MCF 10A (cell line): ENCODE measurements at regions of chr17 and their contacts with region 1.

Region 1: DNA sequence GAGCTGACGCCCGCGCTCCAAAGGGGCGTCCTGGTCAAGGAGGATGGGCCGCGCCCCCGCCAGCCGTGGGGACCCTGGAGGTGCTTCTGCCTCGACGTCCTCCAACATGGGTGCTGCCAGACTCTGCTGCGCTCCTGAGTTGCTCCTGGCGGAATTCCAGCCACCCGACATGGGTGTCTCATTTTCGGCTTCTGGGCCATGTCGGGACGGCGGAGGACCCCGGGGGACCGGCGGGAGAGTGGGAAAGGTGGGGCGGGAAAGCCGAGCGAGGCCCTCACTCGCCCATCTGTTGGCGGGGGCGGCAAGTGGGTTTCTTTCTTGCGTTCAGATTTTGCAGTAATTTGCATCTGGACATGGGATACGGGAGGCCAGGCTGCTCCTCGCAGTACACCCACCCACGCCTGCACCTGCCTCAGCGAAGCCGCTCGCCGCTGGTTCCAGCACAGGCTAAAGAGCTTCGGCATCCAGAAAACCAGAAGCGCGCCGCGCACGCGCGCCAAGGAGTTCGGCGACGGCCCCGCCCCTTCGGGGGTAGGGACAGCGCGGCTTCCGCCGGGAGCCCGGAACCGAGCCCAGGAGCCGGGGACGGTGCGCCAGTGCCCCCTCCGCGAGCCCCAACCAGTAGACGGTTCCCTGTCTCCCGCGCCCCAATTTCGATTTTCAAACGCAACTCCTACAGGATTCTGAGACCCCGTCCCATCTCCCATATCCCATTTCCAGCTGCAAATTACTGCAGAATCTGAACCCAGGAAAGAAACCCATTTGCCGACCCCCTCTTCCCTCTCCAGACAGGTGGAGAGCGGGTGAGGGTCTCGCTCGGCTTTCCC is at the start of gene ARMC7:
- DNase-seq: peak; percentile 86
- H3K4me3 Mint-ChIP-seq: peak within 1 kb of the TSS; percentile 78
- H3K27ac Mint-ChIP-seq: peak within 1 kb of the TSS; percentile 39
- H3K4me1 Mint-ChIP-seq: peaks cover 12% of the 10 kb centered on the region
- H3K27me3 Mint-ChIP-seq: no peaks in the 10 kb centered on the region
- CTCF ChIP-seq: no peak
- total RNA-seq, gene ARMC7: 9.3 and 13.3 TPM in 2 replicates

Region 2: GRCh38 chr17:74892974-74893911 is 216.4 kb before region 1 on chr17 and contains the start of gene FADS6:
- CTCF ChIA-PET with region 1: no interaction called
- POLR2A ChIA-PET with region 1: no interaction called
- intact Hi-C with region 1: no loop called
- DNase-seq: no peak
- H3K4me3 Mint-ChIP-seq: no peak within 1 kb of the TSS
- H3K27ac Mint-ChIP-seq: no peak within 1 kb of the TSS
- H3K4me1 Mint-ChIP-seq: no peaks in the 10 kb centered on the region
- H3K27me3 Mint-ChIP-seq: peaks cover 53% of the 10 kb centered on the region
- CTCF ChIP-seq: no peak
- total RNA-seq, gene FADS6: not detected in 2 replicates

Region 3: GRCh38 chr17:75020331-75021075 is 89.1 kb before region 1 on chr17:
- CTCF ChIA-PET with region 1: no interaction called
- POLR2A ChIA-PET with region 1: no interaction called
- intact Hi-C with region 1: no loop called
- DNase-seq: no peak
- H3K4me3 Mint-ChIP-seq: no peak overlapping the region
- H3K27ac Mint-ChIP-seq: no peak overlapping the region
- H3K4me1 Mint-ChIP-seq: no peaks in the 10 kb centered on the region
- H3K27me3 Mint-ChIP-seq: no peaks in the 10 kb centered on the region
- CTCF ChIP-seq: no peak

Region 4: GRCh38 chr17:75059369-75060345 is 50.0 kb before region 1 on chr17:
- CTCF ChIA-PET with region 1: interaction called, 17 read pairs
- POLR2A ChIA-PET with region 1: interaction called, 4 read pairs
- intact Hi-C with region 1: no loop called
- DNase-seq: no peak
- H3K4me3 Mint-ChIP-seq: no peak overlapping the region
- H3K27ac Mint-ChIP-seq: no peak overlapping the region
- H3K4me1 Mint-ChIP-seq: no peaks in the 10 kb centered on the region
- H3K27me3 Mint-ChIP-seq: no peaks in the 10 kb centered on the region
- CTCF ChIP-seq: peak; percentile 30

Region 5: GRCh38 chr17:75096082-75096625 is 13.5 kb before region 1 on chr17:
- CTCF ChIA-PET with region 1: interaction called, 14 read pairs
- POLR2A ChIA-PET with region 1: interaction called, 37 read pairs
- intact Hi-C with region 1: no loop called
- DNase-seq: peak; percentile 97
- H3K4me3 Mint-ChIP-seq: peak overlapping the region; percentile 62
- H3K27ac Mint-ChIP-seq: peak overlapping the region; percentile 98
- H3K4me1 Mint-ChIP-seq: peaks cover 35% of the 10 kb centered on the region
- H3K27me3 Mint-ChIP-seq: no peaks in the 10 kb centered on the region
- CTCF ChIP-seq: no peak

Region 6: GRCh38 chr17:75144816-75145512 is 35.3 kb after region 1 on chr17:
- CTCF ChIA-PET with region 1: interaction called, 11 read pairs
- POLR2A ChIA-PET with region 1: interaction called, 3 read pairs
- intact Hi-C with region 1: no loop called
- DNase-seq: no peak
- H3K4me3 Mint-ChIP-seq: no peak overlapping the region
- H3K27ac Mint-ChIP-seq: no peak overlapping the region
- H3K4me1 Mint-ChIP-seq: no peaks in the 10 kb centered on the region
- H3K27me3 Mint-ChIP-seq: no peaks in the 10 kb centered on the region
- CTCF ChIP-seq: no peak

Region 7: GRCh38 chr17:75199886-75200618 is 90.4 kb after region 1 on chr17:
- CTCF ChIA-PET with region 1: interaction called, 93 read pairs
- POLR2A ChIA-PET with region 1: interaction called, 23 read pairs
- intact Hi-C with region 1: loop called (anchors 1 kb)
- DNase-seq: no peak
- H3K4me3 Mint-ChIP-seq: no peak overlapping the region
- H3K27ac Mint-ChIP-seq: no peak overlapping the region
- H3K4me1 Mint-ChIP-seq: peaks cover 6% of the 10 kb centered on the region
- H3K27me3 Mint-ChIP-seq: no peaks in the 10 kb centered on the region
- CTCF ChIP-seq: no peak

Region 8: DNA sequence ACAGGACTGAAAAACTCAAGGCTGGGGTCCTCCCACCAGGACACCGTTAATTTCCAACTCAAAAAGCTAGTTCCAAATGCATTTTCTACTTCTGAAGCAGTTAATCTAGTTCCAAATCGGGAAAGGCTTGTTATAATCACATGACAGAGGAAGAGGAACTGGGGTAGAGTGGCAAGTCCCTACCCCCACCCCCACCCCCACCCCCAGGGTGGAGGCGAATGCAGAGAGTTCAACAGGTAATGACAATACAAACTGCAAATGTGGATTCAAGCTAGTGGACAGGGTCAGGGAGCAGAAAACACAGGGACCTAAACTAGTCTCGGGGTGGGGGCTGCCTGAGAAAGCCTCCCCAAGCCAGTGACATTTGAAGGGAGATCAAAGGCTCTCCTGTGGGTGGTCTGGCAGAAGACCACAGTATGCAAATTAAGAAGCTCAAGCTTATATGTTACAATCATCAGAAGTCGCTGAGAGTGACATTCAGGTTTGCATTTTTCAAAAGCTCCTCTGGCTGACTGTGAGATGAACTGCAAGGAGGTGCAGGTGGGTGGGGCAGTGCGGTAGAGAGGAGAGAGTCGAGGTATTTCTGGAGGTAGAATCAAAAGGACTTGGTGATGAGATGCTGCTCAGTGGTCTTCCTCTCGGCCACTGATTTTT is 236.0 kb after region 1 on chr17:
- CTCF ChIA-PET with region 1: no interaction called
- POLR2A ChIA-PET with region 1: no interaction called
- intact Hi-C with region 1: no loop called
- DNase-seq: no peak
- H3K4me3 Mint-ChIP-seq: no peak overlapping the region
- H3K27ac Mint-ChIP-seq: no peak overlapping the region
- H3K4me1 Mint-ChIP-seq: peaks cover 15% of the 10 kb centered on the region
- H3K27me3 Mint-ChIP-seq: no peaks in the 10 kb centered on the region
- CTCF ChIP-seq: no peak

Region 9: DNA sequence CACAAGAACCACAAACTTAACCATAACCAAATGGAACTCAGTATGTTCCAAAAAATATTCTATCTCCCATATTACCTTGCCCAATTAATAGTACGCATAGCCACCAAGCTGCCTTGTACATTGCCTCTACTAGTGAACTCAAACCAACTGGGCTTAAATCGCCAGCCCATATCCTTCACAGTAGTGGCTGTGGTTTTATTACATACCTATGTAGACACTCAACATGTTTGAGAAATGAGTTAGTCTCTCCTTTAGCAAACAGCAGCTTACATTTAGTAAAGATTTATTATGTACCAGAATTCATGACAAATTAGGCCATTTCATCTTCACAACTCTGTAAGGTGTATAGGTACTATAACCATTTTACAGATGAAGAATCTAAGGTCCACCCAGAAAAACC is 254.5 kb after region 1 on chr17:
- CTCF ChIA-PET with region 1: no interaction called
- POLR2A ChIA-PET with region 1: no interaction called
- intact Hi-C with region 1: no loop called
- DNase-seq: peak; percentile 21
- H3K4me3 Mint-ChIP-seq: no peak overlapping the region
- H3K27ac Mint-ChIP-seq: no peak overlapping the region
- H3K4me1 Mint-ChIP-seq: peaks cover 28% of the 10 kb centered on the region
- H3K27me3 Mint-ChIP-seq: no peaks in the 10 kb centered on the region
- CTCF ChIP-seq: no peak

Region 10: DNA sequence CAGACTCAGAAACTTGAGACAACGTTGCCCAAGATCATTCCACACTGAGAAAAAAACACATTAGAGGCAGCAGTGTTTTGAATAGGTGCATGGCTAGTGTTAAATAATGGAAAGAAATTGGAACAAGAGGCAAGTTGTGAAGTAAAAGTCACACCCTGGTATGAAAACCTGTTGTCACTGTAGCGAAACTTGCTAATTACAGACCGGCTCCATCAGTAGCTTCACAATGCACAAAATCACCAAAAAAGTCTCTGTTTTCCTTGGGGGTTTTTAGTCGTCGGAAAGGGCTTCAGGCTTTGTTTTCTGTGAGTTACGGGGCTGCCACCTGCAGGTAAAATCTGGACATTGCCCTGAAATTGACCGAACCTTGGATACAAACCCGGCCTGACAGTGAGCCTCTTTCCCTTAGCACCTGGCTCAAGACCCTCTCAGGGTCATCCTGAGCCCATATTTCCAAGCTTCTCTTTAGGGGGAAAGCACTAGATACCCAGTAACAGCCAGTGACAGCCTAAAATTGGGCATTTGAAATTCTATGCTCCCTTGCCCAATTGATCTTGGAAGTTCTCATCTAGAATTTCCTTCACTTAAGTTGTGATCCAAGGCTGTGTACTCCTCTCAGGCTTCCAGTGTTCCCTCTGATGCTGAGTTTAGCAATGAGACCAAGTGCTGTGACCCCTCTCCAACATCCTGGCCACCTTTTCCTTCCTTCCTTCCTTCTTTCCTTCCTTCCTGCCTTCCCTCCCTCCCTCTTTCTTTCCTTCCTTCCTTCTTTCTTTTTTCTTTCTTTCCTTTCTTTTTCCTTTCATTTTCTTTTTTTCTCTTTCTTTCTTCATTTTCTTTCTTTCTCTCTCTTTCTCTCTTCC is 303.1 kb after region 1 on chr17:
- CTCF ChIA-PET with region 1: no interaction called
- POLR2A ChIA-PET with region 1: no interaction called
- intact Hi-C with region 1: loop called (anchors 5 kb)
- DNase-seq: peak; percentile 74
- H3K4me3 Mint-ChIP-seq: peak overlapping the region; percentile 35
- H3K27ac Mint-ChIP-seq: peak overlapping the region; percentile 76
- H3K4me1 Mint-ChIP-seq: peaks cover 11% of the 10 kb centered on the region
- H3K27me3 Mint-ChIP-seq: peaks cover 30% of the 10 kb centered on the region
- CTCF ChIP-seq: peak; percentile 82